Activated B cell treated with CpG ODN at 0.5 μM for 24 hours (primary cell): ENCODE measurements at regions of chr12 and their contacts with region 1.

Region 1: DNA sequence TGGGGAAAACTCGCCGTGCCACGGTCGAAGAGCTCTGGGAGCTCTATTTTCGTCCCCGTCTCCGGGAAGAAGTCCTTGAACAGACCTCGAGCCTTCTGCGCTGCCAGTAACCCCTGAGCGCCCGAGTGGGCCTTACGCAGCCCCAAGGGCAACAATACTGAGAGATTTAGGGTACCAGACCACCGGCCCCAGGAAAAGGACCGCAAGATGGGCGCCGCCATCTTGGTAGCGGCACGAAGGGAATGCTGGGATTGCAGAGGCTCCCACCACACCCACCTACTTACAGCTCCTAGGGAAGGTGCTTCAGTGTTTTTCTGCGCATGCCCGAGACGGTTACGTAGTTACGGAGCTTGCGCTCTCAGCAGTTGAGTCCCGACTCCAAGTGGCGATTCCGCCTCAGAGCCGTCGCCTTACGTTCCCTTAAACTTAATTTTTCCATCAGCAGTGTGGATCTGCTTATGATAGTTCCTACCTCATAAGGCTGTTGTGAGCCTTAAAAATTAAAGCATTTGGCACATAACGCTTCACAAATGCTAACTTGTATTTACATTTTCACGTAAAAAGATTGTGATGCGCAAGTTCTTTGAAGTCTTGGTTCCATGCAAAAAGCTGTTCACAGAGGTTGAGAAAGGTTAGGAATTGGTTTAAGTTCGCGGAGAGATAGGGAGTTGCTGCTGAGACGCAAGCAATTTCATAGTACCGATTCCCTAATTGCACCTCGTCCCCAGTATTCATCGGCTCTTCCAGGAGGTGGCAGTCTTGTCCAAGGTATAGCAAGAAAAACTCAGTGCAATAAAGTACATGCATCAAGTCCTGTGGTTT is at the start of gene YARS2:
- DNase-seq: peak; percentile 75
- ATAC-seq: peak; percentile 87
- H3K4me3 Mint-ChIP-seq: peak within 1 kb of the TSS; percentile 95
- H3K27ac Mint-ChIP-seq: peak within 1 kb of the TSS; percentile 92
- H3K4me1 Mint-ChIP-seq: peaks cover 17% of the 10 kb centered on the region
- H3K27me3 Mint-ChIP-seq: no peaks in the 10 kb centered on the region
- CTCF ChIP-seq: no peak
- total RNA-seq, gene YARS2: 19.6 and 23.2 TPM in 2 replicates

Region 2: DNA sequence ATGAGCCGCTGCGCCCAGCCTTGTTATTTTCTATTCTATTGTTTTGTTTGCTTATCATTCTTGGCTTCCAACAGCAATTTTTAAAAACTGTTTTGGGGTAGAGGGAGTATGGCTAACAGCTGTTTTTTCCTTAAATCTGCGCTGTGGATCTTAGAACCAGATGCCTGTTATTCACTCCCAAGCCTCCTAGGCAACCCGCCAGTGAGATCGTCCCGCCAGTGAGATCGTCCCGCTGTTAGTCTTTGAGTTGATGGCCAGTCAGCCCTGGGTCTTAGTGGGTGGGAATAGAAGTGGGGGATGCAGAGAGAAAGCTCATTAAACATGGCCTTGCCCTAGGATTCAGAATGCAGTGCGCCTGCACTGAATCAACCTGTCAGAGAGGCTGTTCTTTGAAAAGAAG is 716.5 kb before region 1 on chr12:
- CTCF ChIA-PET with region 1: no interaction called
- POLR2A ChIA-PET with region 1: no interaction called
- intact Hi-C with region 1: no loop called
- DNase-seq: no peak
- ATAC-seq: no peak
- H3K4me3 Mint-ChIP-seq: no peak overlapping the region
- H3K27ac Mint-ChIP-seq: no peak overlapping the region
- H3K4me1 Mint-ChIP-seq: no peaks in the 10 kb centered on the region
- H3K27me3 Mint-ChIP-seq: no peaks in the 10 kb centered on the region
- CTCF ChIP-seq: no peak

Region 3: DNA sequence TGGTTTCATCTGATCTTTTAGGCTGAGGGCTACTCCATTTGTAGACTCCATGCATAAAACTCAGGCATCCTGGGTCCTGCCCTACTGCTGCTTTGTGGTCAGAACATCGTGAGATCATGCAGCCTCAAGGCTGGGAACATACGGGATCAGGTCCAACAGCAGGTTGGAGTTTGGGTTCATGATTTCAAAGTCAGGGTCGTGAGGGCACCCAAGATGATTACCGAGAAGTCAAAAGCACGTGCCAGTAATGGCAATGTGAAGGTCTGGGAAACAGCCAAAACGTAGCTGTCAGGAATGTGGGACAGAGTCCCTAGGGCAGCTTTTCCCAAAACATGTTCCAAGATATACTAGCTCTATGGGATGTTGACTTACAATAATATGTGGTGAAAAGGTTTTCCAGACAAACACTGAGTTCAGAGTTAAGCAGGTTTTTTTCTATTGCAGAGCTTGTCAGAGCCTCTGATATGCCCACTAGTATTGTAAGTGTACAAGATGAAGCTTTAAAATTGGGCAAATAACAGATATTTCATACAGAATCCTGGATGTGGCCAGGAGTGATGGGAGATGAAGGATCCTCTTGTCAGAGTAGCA is 207.1 kb before region 1 on chr12:
- CTCF ChIA-PET with region 1: no interaction called
- POLR2A ChIA-PET with region 1: no interaction called
- intact Hi-C with region 1: no loop called
- DNase-seq: no peak
- ATAC-seq: no peak
- H3K4me3 Mint-ChIP-seq: no peak overlapping the region
- H3K27ac Mint-ChIP-seq: peak overlapping the region; percentile 19
- H3K4me1 Mint-ChIP-seq: peaks cover 48% of the 10 kb centered on the region
- H3K27me3 Mint-ChIP-seq: no peaks in the 10 kb centered on the region
- CTCF ChIP-seq: no peak

Region 4: DNA sequence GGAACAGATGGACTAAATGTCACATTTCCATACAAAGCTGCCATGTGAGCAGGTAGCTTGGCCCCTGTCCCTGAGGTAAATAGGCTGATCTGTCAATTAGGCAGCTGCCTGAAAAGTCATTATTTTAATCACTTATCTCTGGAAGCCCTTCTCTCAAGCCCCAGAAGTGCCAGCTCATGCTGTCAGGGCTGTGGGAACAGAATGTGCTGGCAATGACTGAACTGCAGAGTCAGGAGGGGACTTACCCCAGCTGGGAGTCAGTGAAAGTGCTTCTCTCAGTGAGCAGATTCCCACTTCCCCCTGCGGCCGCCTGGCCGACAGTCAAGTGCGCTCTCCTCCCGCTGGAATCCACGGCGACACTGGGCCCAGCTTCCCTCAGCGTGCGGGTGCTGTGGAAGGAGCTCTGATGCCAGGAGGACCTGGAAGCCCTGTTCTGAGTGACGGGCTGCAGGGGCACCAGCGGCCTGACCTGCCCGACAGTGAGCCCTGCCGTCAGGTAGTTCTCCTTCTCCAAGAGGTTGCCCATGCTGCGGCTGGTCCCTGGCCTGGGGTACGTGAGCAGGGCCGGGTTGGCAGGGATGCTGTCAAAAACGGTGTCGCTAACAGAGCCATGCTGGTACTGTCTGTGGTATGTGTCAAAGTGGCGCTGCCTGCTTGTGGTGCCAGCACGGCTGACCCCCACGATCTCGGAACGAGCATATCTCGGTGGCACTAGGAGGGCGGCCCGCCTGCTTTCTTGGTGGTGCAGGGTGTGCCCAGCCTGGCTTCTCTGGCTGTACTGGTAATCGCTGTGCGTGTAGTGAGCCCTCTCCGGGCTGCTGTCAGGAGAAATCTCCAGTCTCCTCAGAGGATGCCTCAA is 122.0 kb after region 1 on chr12:
- CTCF ChIA-PET with region 1: no interaction called
- POLR2A ChIA-PET with region 1: no interaction called
- intact Hi-C with region 1: no loop called
- DNase-seq: no peak
- ATAC-seq: no peak
- H3K4me3 Mint-ChIP-seq: no peak overlapping the region
- H3K27ac Mint-ChIP-seq: no peak overlapping the region
- H3K4me1 Mint-ChIP-seq: no peaks in the 10 kb centered on the region
- H3K27me3 Mint-ChIP-seq: no peaks in the 10 kb centered on the region
- CTCF ChIP-seq: no peak

Region 5: DNA sequence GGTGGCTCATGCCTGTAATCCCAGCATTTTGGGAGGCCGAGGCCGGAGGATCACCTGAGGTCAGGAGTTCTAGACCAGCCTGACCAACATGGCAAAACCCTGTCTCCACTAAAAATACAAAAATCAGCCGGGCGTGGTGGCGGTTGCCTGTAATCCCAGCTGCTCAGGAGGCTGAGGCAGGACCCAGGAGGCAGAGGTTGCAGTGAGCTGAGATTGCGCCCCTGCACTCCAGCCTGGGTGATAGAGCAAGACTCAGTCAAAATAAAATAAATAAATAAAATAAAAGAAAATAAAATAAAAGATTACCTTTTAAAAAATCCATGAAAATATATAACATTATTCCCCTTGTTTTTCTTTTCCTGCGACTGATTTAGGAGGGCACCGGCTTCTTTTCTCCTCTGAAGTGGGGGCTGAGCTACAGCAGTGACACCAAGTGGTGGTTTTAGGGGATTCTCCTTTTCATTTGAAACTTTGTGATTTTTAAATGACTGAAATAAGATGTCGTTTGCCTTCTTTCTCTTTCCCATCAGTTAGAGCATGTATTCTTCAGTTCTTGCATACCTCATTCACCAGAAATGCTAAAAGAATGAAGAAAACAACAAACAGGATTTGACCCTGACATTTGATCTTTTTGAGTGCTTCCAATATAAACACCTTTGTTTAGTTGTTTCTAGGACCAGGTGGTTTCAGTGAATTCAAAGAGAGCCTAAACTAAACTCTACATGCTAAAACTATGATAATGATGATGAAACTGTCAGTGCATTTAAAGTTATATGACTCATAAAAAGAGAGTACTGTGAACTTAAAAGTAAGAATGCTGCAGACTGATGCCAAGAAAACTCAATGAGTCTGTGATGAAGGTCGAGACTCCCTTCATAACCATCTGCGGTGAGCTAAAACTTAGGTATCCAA is 163.3 kb after region 1 on chr12:
- CTCF ChIA-PET with region 1: interaction called, 7 read pairs
- POLR2A ChIA-PET with region 1: no interaction called
- intact Hi-C with region 1: loop called (anchors 1 kb)
- DNase-seq: no peak
- ATAC-seq: no peak
- H3K4me3 Mint-ChIP-seq: no peak overlapping the region
- H3K27ac Mint-ChIP-seq: no peak overlapping the region
- H3K4me1 Mint-ChIP-seq: no peaks in the 10 kb centered on the region
- H3K27me3 Mint-ChIP-seq: peaks cover 4% of the 10 kb centered on the region
- CTCF ChIP-seq: no peak

Region 6: GRCh38 chr12:34022079-34022830 is 1266.4 kb after region 1 on chr12 and contains the start of gene ALG10:
- CTCF ChIA-PET with region 1: interaction called, 51 read pairs
- POLR2A ChIA-PET with region 1: interaction called, 77 read pairs
- intact Hi-C with region 1: loop called (anchors 1 kb)
- DNase-seq: peak; percentile 90
- ATAC-seq: peak; percentile 98
- H3K4me3 Mint-ChIP-seq: peak within 1 kb of the TSS; percentile 94
- H3K27ac Mint-ChIP-seq: peak within 1 kb of the TSS; percentile 92
- H3K4me1 Mint-ChIP-seq: peaks cover 16% of the 10 kb centered on the region
- H3K27me3 Mint-ChIP-seq: peaks cover 4% of the 10 kb centered on the region
- CTCF ChIP-seq: peak; percentile 53
- total RNA-seq, gene ALG10: 14.8 and 19.6 TPM in 2 replicates

Region 7: DNA sequence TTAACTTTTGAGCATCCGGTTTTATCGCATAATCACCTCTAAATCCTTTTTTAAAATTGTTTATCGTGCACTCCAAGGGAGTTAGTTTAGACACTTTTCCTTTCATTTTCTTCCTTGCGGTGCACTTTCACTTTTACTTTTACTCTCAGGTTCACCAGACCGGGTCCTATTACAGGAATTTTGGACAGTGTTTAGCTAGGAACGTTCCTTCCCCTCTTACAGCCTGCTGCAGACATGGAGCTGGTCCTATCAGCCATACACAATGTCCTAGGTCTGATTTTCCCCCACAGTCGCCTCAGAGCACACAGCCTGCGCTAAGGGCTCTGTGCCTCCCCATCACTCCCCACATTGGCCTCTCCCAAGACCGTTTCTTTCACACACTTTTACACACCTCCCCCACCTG is 1370.4 kb after region 1 on chr12:
- CTCF ChIA-PET with region 1: interaction called, 3 read pairs
- POLR2A ChIA-PET with region 1: no interaction called
- intact Hi-C with region 1: loop called (anchors 5 kb)
- DNase-seq: no peak
- ATAC-seq: peak; percentile 28
- H3K4me3 Mint-ChIP-seq: peak overlapping the region; percentile 71
- H3K27ac Mint-ChIP-seq: peak overlapping the region; percentile 54
- H3K4me1 Mint-ChIP-seq: peaks cover 17% of the 10 kb centered on the region
- H3K27me3 Mint-ChIP-seq: no peaks in the 10 kb centered on the region
- CTCF ChIP-seq: no peak